ENCODE measurements at regions of chr4 and their contacts with region 1.

Region 1: DNA sequence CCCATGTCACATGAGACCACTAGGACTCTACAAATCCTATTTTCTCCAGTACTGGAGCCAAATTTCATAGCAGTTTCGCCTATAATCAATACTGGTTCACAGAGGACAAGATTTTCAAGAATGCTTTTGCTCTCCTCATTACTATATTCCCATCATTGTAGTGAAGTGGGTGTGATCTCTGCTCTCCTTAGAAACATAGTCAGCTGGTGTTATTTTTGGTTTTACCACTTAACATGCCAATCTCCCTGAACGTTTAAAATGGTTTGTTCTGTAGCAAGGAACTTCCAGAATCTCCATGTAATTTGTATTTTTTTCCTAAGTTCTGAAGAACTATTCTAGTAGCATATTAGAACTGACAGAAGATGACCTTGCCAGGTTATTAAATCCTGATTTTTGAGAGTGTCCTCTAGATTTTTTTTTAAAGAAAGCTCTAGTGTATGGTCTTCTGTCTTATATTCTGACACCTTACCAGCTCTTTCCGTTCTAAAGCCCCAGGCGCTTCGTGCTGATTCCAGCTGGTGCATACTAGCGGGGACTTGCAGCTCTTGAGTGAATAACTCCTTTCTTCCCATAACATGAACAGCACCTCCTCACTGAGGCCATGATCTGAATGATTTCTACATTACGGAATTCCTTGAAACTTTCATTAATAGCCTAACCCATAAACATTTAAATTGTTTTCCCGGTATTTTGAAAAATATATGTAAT is 1372.9 kb downstream of the TECRL start:
- DNase-seq: peak in 1 of 5 donors; percentile 51
- ATAC-seq: peak; percentile 70 to 87 (median 78)
- H3K4me3 ChIP-seq: peak overlapping the region in 2 of 12 donors; percentile 13 to 15
- H3K27ac ChIP-seq: peak overlapping the region in 6 of 12 donors; percentile 6 to 67 (median 54)
- H3K4me1 ChIP-seq: no peaks in the 10 kb centered on the region
- H3K27me3 ChIP-seq: no peaks in the 10 kb centered on the region
- CTCF ChIP-seq: no peak
- POLR2A ChIP-seq: no peak

Region 2: GRCh38 chr4:62930884-62931283 is 105.4 kb before region 1 on chr4:
- intact Hi-C with region 1: loop called in 3 of 10 experiments (anchors 10 kb)
- DNase-seq: no peak
- ATAC-seq: peak in 2 of 4 donors; percentile 55 to 59
- H3K4me3 ChIP-seq: peak overlapping the region in 1 of 12 donors; percentile 27
- H3K27ac ChIP-seq: peak overlapping the region in 8 of 12 donors; percentile 4 to 78 (median 41)
- H3K4me1 ChIP-seq: peaks cover 0 to 3% (median 0%) of the 10 kb centered on the region in 12 donors
- H3K27me3 ChIP-seq: no peaks in the 10 kb centered on the region
- CTCF ChIP-seq: no peak
- POLR2A ChIP-seq: no peak

Region 3: DNA sequence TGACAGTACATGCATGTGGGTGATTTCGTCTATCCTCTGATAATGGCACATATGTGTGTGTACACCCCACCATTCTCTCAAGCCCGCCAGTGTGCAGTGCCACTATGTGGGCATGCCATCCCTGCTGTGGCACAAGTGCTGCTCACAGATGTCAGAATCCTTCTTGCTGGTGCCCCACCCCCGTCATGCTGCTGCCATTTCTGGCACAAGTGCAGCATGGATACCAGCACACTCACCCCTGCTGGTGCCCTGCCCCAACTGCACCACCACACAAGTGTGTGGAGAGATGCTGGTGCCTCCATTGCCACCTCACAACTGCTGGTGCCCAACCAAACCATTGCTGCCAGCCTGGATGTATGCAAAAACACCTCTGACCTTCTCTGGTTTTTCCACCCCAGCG is 239.2 kb after region 1 on chr4:
- intact Hi-C with region 1: no loop called
- DNase-seq: no peak
- ATAC-seq: no peak
- H3K4me3 ChIP-seq: no peak overlapping the region
- H3K27ac ChIP-seq: no peak overlapping the region
- H3K4me1 ChIP-seq: no peaks in the 10 kb centered on the region
- H3K27me3 ChIP-seq: no peaks in the 10 kb centered on the region
- CTCF ChIP-seq: no peak
- POLR2A ChIP-seq: no peak

Measured in heart left ventricle (tissue), 16 donors.